ENCODE measurements at regions of chr6 and their contacts with region 1.

Region 1: GRCh38 chr6:116279260-116280063 is at the start of gene TSPYL1:
- DNase-seq: peak; percentile 93 to 97
- H3K4me3 ChIP-seq: peak within 1 kb of the TSS; percentile 88
- H3K27ac ChIP-seq: peak within 1 kb of the TSS; percentile 86
- H3K4me1 ChIP-seq: peaks cover 47% of the 10 kb centered on the region
- H3K27me3 ChIP-seq: no peaks in the 10 kb centered on the region
- CTCF ChIP-seq: 0 out of 2 replicates have a peak, but pooled peaks have one; percentile 10
- total RNA-seq, gene TSPYL1: 52.8 and 73.1 TPM in 2 replicates

Region 2: GRCh38 chr6:116190550-116190949 is 88.9 kb before region 1 on chr6:
- CTCF ChIA-PET with region 1: no interaction called
- POLR2A ChIA-PET with region 1: no interaction called
- intact Hi-C with region 1: no loop called
- DNase-seq: peak in 1 of 2 experiments; percentile 17
- H3K4me3 ChIP-seq: no peak overlapping the region
- H3K27ac ChIP-seq: no peak overlapping the region
- H3K4me1 ChIP-seq: no peaks in the 10 kb centered on the region
- H3K27me3 ChIP-seq: no peaks in the 10 kb centered on the region
- CTCF ChIP-seq: no peak

Region 3: DNA sequence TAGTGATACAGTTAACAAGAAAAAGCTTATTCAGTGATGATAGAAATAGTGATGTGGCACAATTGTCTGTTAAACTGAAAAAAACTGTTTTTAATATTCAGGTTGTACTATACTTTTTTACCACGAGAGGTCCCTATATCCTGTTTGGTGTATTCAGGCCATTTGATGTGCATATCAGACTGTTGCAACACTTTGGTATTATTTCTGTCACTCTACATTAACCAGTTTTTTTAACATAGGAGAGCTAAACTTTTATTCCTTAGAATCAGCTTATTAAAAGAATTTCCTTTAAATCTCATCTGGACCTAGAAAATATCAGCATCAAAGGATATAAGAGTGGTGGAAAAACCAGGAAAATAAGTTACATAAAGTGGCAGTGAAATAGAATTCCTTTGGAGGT is 62.4 kb before region 1 on chr6:
- CTCF ChIA-PET with region 1: no interaction called
- POLR2A ChIA-PET with region 1: interaction called, 22 read pairs
- intact Hi-C with region 1: no loop called
- DNase-seq: peak in 1 of 2 experiments; percentile 53
- H3K4me3 ChIP-seq: no peak overlapping the region
- H3K27ac ChIP-seq: peak overlapping the region; percentile 32; the same call in 1 of the 2 replicates
- H3K4me1 ChIP-seq: no peaks in the 10 kb centered on the region
- H3K27me3 ChIP-seq: no peaks in the 10 kb centered on the region
- CTCF ChIP-seq: peak; percentile 77

Region 4: GRCh38 chr6:116253505-116254296 is 25.8 kb before region 1 on chr6 and contains the start of gene TSPYL4:
- CTCF ChIA-PET with region 1: no interaction called
- POLR2A ChIA-PET with region 1: interaction called, 3 read pairs
- intact Hi-C with region 1: loop called (anchors 1 kb)
- DNase-seq: peak; percentile 87 to 95
- H3K4me3 ChIP-seq: peak within 1 kb of the TSS; percentile 82
- H3K27ac ChIP-seq: peak within 1 kb of the TSS; percentile 77
- H3K4me1 ChIP-seq: peaks cover 46% of the 10 kb centered on the region
- H3K27me3 ChIP-seq: no peaks in the 10 kb centered on the region
- CTCF ChIP-seq: no peak
- total RNA-seq, gene TSPYL4: 10.6 and 10.9 TPM in 2 replicates

Region 5: DNA sequence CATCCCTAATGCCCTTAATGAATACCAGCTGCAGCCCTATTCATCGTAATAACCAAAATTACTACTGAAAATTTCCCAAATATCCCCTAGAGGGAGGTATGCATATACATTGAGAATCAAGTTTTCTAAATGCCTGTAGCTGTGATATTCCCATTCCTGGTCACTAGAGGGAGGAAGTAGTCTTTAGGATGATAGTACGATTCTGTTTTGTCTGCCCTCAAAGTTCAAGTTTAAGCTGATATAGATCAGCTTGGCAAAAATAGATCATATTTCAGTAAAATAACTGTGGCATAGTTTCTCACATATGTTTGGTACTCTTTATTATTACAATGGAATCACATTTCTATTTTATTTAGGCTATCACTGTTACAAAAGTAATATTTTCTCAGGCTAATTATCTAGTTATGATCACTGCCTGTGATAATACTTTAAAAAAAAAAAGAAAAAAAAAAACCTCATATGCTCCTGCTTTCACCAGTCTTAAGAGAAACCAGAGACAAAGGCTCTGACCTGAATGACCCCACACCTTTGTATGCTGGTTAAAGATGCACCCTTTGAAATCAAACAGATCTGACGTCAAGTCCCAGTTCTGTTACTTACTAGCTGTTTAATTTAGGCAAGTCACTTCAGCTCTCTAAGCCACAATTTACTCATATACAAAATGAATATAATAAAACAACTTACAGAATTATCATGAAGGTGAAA is 10.7 kb before region 1 on chr6:
- CTCF ChIA-PET with region 1: interaction called, 12 read pairs
- POLR2A ChIA-PET with region 1: interaction called, 3 read pairs
- intact Hi-C with region 1: no loop called
- DNase-seq: peak in 1 of 2 experiments; percentile 83
- H3K4me3 ChIP-seq: no peak overlapping the region
- H3K27ac ChIP-seq: no peak overlapping the region
- H3K4me1 ChIP-seq: peaks cover 6% of the 10 kb centered on the region; the same call in 1 of the 2 replicates
- H3K27me3 ChIP-seq: no peaks in the 10 kb centered on the region
- CTCF ChIP-seq: peak; percentile 98

Region 6: DNA sequence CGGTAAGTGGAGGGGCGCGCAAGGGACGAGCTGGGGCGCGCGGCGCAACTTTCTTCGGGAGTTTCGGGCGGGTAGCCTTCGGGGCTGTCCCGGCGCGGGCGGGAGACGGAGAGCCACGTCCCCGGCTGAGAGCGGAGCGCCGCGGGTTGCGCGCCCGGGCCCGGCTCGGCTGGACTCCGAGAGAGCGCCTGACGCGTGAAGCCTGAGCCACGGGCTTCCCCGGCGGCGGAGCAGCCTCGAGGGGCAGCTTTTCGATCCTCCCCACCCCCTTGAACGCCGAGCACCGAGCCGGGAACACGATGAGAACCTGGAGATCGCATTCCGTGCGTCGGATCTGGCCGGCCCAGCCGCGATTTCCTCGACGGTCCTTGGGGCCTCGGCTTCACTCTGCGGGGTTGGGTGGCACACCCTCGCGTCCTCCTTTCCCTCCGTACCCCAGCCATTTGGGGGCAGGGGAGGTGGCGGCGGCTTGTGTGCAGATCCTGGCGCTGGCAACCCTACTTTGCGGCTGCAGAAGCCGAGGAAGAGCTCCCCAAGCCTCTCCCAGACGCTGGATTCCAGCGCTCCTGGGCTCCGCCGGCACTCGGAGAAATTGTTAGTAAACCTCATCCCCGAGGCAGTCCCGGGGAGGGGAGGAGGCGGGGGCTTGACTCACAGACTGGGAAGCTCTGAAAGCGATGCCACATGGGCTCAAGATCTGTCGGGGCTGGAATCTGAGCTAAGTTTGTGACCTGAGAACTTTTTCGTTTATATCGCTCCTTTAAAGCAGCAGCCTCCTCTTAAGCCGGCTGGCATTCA is 91.9 kb after region 1 on chr6:
- CTCF ChIA-PET with region 1: no interaction called
- POLR2A ChIA-PET with region 1: interaction called, 6 read pairs
- intact Hi-C with region 1: loop called (anchors 2 kb)
- DNase-seq: peak; percentile 74 to 81
- H3K4me3 ChIP-seq: peak overlapping the region; percentile 74
- H3K27ac ChIP-seq: peak overlapping the region; percentile 83
- H3K4me1 ChIP-seq: peaks cover 17% of the 10 kb centered on the region
- H3K27me3 ChIP-seq: no peaks in the 10 kb centered on the region
- CTCF ChIP-seq: no peak

Region 7: DNA sequence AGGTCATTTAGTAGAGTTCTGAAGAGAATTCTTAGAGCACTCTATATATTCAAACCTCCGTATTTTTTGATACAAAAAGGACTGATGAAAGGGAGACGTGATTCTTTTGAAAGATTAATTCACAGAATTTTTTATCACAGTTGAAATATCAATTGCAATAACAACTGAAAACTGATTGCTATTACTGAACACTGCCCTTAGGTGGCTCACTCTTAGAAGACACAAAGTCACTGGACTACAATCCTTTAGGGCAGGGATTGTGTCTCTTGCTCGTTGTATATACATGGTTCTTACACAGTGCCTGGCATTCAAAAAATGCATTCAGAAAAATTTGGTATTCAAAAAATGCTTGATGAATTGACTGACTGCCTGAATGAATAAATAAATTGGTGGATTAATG is 164.6 kb after region 1 on chr6:
- CTCF ChIA-PET with region 1: no interaction called
- POLR2A ChIA-PET with region 1: no interaction called
- intact Hi-C with region 1: loop called (anchors 1 kb)
- DNase-seq: no peak
- H3K4me3 ChIP-seq: no peak overlapping the region
- H3K27ac ChIP-seq: no peak overlapping the region
- H3K4me1 ChIP-seq: peaks cover 26% of the 10 kb centered on the region
- H3K27me3 ChIP-seq: no peaks in the 10 kb centered on the region
- CTCF ChIP-seq: peak; percentile 77

Region 8: GRCh38 chr6:116531675-116532570 is 252.5 kb after region 1 on chr6:
- CTCF ChIA-PET with region 1: no interaction called
- POLR2A ChIA-PET with region 1: no interaction called
- intact Hi-C with region 1: no loop called
- DNase-seq: peak; percentile 47 to 54
- H3K4me3 ChIP-seq: no peak overlapping the region
- H3K27ac ChIP-seq: no peak overlapping the region
- H3K4me1 ChIP-seq: no peaks in the 10 kb centered on the region; the same call in 1 of the 2 replicates
- H3K27me3 ChIP-seq: no peaks in the 10 kb centered on the region
- CTCF ChIP-seq: peak; percentile 91

Region 9: DNA sequence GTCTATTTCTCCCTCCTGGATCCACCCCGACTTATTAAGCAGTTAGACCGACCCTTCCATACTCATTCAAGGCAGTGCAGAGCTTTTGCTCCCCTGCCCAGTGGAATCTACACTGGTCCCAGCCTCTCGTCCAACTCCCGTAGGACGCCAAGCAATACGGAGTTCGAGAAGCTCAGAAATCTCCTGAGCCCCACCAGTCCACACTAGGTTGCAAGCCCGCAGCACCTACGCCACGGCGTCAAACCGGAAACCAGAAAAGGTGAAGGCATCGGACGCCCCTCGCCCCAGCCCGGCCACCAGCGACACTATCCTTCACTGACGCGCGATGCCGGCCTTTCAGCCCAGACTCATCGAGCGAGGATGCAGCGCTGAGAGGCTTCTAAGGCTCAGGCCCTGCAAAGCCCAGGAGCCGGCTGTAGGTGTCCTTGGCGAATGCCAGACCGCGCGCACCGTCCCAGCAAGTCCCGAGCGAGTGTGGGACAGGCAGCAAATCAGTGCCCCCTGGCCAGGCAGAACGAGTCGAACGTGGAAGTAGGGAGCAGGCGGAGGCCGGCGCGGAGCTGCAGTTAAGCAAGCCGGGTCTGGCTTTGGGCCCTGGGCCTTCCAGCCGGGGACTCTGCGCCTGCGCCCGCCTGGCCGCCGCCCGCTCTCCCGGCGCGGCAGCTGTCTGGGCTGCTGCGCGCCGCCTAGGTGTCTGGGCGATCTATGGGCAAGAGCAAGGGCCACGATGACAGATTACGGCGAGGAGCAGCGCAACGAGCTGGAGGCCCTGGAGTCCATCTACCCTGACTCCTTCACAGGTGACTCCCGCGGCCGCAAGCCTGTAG is 291.6 kb after region 1 on chr6 and contains the start of gene RWDD1:
- CTCF ChIA-PET with region 1: no interaction called
- POLR2A ChIA-PET with region 1: interaction called, 6 read pairs
- intact Hi-C with region 1: loop called (anchors 1 kb)
- DNase-seq: peak; percentile 99
- H3K4me3 ChIP-seq: peak within 1 kb of the TSS; percentile 95
- H3K27ac ChIP-seq: peak within 1 kb of the TSS; percentile 60
- H3K4me1 ChIP-seq: peaks cover 30% of the 10 kb centered on the region
- H3K27me3 ChIP-seq: no peaks in the 10 kb centered on the region
- CTCF ChIP-seq: 0 out of 2 replicates have a peak, but pooled peaks have one; percentile 25
- total RNA-seq, gene RWDD1: 21.5 and 22.9 TPM in 2 replicates

Measured in PC-9 (cell line).